Adrenal gland (tissue), 19 donors: ENCODE measurements at regions of chr17 and their contacts with region 1.

Region 1: GRCh38 chr17:5092139-5093010 is 14.1 kb downstream of the ZFP3 start:
- DNase-seq: no peak
- H3K4me3 ChIP-seq: peak overlapping the region in 1 of 4 donors; percentile 17
- H3K27ac ChIP-seq: no peak overlapping the region
- H3K4me1 ChIP-seq: no peaks in the 10 kb centered on the region
- H3K27me3 ChIP-seq: no peaks in the 10 kb centered on the region
- CTCF ChIP-seq: no peak
- POLR2A ChIP-seq: no peak

Region 2: GRCh38 chr17:5184288-5184687 is 91.9 kb after region 1 on chr17:
- intact Hi-C with region 1: loop called in 1 of 2 experiments (anchors 5 kb)
- DNase-seq: no peak
- H3K4me3 ChIP-seq: peak overlapping the region in 1 of 4 donors; percentile 7
- H3K27ac ChIP-seq: no peak overlapping the region
- H3K4me1 ChIP-seq: no peaks in the 10 kb centered on the region
- H3K27me3 ChIP-seq: no peaks in the 10 kb centered on the region
- CTCF ChIP-seq: no peak
- POLR2A ChIP-seq: no peak